ENCODE measurements at regions of chr16 and their contacts with region 1.

Region 1: GRCh38 chr16:82456683-82457082 is 170.1 kb upstream of the CDH13 start:
- DNase-seq: no peak
- H3K4me3 ChIP-seq: no peak overlapping the region
- H3K27ac ChIP-seq: no peak overlapping the region
- H3K4me1 ChIP-seq: peaks cover 0 to 6% (median 0%) of the 10 kb centered on the region in 3 donors
- H3K27me3 ChIP-seq: peaks cover 0 to 32% (median 0%) of the 10 kb centered on the region in 4 donors
- CTCF ChIP-seq: peak; percentile 25 to 74 (median 68)
- POLR2A ChIP-seq: no peak

Region 2: GRCh38 chr16:82263521-82264143 is 193.1 kb before region 1 on chr16:
- intact Hi-C with region 1: loop called (anchors 10 kb)
- DNase-seq: no peak
- H3K4me3 ChIP-seq: no peak overlapping the region
- H3K27ac ChIP-seq: no peak overlapping the region
- H3K4me1 ChIP-seq: peaks cover 0 to 7% (median 0%) of the 10 kb centered on the region in 3 donors
- H3K27me3 ChIP-seq: peaks cover 0 to 33% (median 0%) of the 10 kb centered on the region in 4 donors
- CTCF ChIP-seq: peak; percentile 82 to 90 (median 86)
- POLR2A ChIP-seq: no peak